Heart right ventricle (tissue), 16 donors: ENCODE measurements at regions of chr5 and their contacts with region 1.

Region 1: DNA sequence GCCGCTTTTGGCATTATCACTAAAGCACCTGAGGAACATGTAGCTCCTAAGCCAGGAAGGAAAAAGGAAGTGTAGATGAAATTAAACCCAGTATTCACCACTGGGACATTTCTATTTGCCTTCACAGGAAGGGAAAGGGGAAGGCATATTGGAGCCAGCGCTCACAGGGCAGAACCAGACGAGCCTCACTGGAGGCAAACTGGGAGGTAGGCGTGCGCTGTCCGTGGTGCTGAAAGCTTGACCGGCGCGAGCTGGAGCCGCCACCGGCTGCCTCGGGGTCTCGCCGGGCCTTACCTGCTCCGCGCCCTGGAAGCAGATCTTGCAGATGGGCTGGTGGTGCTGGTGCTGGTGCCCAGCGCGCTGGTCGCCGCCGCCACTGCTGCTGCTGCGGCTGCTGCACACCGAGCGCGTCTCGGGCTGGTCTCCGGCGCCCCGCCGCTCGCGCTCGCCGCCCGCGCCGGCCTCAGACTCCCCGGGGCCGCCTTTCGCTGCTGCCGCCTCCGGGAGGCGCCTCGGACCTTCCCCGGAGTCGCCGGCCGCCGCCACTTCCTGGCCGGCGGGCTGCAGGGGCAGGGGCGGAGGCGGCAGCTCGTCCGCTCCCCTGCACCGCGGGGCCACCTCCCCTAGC is 732 bp downstream of the MARCHF11 start:
- DNase-seq: peak; percentile 66 to 79
- ATAC-seq: peak; percentile 86 to 97 (median 91)
- H3K4me3 ChIP-seq: peak overlapping the region in 9 of 10 donors; percentile 15 to 47 (median 41)
- H3K27ac ChIP-seq: no peak overlapping the region
- H3K4me1 ChIP-seq: peaks cover 0 to 5% (median 0%) of the 10 kb centered on the region in 9 donors
- H3K27me3 ChIP-seq: peaks cover 0 to 62% (median 38%) of the 10 kb centered on the region in 7 donors
- CTCF ChIP-seq: peak in 2 of 9 donors; percentile 3 to 28

Region 2: DNA sequence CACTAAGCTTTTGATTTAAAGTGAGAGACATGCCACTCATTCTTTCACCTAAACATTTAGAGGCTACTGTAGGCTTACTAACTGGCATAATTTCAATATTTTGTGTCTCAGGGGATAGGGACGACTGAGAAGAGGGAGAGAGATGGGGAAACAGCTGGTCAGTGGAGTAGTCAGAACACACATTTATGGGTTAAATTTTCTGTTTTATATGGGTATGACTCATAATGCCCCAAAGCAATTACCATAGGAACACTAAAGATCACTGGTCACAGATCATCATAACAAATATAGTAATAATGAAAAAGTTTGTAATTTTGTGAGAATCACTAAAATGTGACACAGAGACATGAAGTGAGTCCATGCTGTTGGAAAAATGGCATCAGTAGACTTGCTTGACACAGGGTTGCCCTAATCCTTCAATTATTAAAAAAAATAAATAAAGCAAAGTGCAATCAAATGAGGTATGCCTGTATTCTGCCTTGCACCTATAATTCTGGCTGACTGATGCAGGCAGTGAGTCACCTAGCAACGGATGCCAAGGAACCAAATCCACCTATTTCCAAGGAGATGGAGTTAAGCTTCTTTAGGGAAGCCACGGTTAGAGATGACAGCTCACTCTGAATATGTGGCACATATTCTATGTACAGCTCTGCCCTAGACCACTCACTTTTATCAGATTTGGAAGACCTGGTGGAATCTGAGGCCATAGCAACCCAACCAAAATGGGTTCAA is 165.4 kb before region 1 on chr5:
- intact Hi-C with region 1: no loop called
- DNase-seq: no peak
- ATAC-seq: no peak
- H3K4me3 ChIP-seq: no peak overlapping the region
- H3K27ac ChIP-seq: no peak overlapping the region
- H3K4me1 ChIP-seq: no peaks in the 10 kb centered on the region
- H3K27me3 ChIP-seq: no peaks in the 10 kb centered on the region
- CTCF ChIP-seq: no peak

Region 3: DNA sequence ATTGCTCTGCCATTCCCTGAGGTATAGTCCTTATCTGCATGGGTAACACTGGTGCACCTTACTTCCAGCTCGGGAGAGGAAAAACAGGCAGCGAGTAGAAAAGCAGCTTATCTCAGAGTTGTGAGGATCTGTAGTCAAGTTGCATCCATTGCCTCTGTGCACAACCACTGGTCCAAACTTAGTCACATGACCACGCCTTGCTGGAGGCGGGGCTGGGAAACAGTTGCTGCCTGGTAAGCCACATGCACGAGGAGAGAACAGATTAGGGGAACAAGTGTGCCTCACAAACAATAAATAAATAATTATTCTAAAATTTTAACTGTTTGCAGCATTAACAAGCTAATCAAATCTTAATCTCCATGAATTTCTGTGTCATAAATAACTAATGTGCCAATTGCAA is 268.1 kb after region 1 on chr5:
- intact Hi-C with region 1: loop called in 2 of 10 experiments (anchors 5 to 10 kb)
- DNase-seq: no peak
- ATAC-seq: no peak
- H3K4me3 ChIP-seq: no peak overlapping the region
- H3K27ac ChIP-seq: no peak overlapping the region
- H3K4me1 ChIP-seq: no peaks in the 10 kb centered on the region
- H3K27me3 ChIP-seq: no peaks in the 10 kb centered on the region
- CTCF ChIP-seq: no peak